ENCODE measurements at regions of chr9 and their contacts with region 1.

Region 1: GRCh38 chr9:2857564-2858198 is 13.8 kb upstream of the PUM3 start:
- DNase-seq: peak in 1 of 2 donors; percentile 71
- ATAC-seq: peak; percentile 77
- H3K4me3 ChIP-seq: no peak overlapping the region
- H3K27ac ChIP-seq: no peak overlapping the region
- H3K4me1 ChIP-seq: no peaks in the 10 kb centered on the region
- H3K27me3 ChIP-seq: no peaks in the 10 kb centered on the region

Region 2: GRCh38 chr9:3181049-3181953 is 323.6 kb after region 1 on chr9:
- intact Hi-C with region 1: loop called in 1 of 2 experiments (anchors 10 kb)
- DNase-seq: peak in 1 of 2 donors; percentile 47
- ATAC-seq: peak; percentile 39
- H3K4me3 ChIP-seq: no peak overlapping the region
- H3K27ac ChIP-seq: no peak overlapping the region
- H3K4me1 ChIP-seq: no peaks in the 10 kb centered on the region
- H3K27me3 ChIP-seq: no peaks in the 10 kb centered on the region

Measured in aorta (tissue), 5 donors.